ENCODE measurements at regions of chr6 and their contacts with region 1.

Region 1: DNA sequence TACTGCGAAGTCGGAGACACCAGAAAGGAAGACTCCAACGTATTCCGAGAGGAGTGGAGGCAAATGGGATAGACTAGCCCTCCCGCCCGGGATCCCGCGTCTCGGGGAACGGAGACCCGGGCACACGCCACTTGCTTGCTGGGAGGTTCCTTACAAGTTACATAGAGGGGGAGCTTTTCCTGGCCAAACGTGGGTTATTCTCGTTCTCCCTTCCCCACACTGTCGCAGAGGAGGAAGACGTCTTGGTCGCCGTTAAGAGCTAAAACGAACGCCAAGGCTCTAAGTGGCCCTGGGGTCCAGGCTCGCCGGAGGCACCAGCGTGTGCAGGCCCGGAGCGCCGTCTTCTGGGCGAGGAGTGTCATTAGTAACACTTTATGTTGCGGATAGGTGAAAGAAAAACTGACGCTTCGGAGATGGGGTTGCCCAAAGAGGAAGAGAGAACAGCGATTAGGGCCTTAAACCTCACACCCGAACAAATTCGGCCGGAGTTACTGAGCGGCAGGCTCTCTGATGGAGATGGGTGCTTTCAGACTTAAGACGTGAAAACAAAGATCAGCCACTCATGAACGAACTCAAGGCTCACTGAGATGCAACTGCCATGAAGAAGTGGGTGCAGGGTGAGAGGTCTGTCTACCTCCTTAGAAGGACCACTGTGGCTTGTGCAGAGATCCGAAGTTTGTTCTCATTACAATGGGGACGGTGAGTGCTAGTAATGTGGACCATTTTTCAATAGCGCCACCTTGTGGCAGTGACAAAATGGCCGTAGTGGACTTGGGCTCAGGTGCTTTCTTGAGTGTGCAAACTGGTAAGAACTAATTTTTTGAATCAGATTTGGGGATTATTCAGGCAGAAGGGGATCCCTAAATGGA is 11.7 kb upstream of the ZNF311 start:
- DNase-seq: peak; percentile 76
- ATAC-seq: peak; percentile 97
- H3K4me3 ChIP-seq: peak overlapping the region; percentile 64
- H3K27ac ChIP-seq: no peak overlapping the region; the same call in 1 of the 2 replicates
- H3K4me1 ChIP-seq: no peaks in the 10 kb centered on the region
- H3K27me3 ChIP-seq: peaks cover 10% of the 10 kb centered on the region
- CTCF ChIP-seq: peak; percentile 78
- POLR2A ChIP-seq: no peak
- RAD21 ChIP-seq: peak; percentile 73

Region 2: GRCh38 chr6:28863604-28864320 is 153.0 kb before region 1 on chr6:
- CTCF ChIA-PET with region 1: no interaction called
- POLR2A ChIA-PET with region 1: no interaction called
- dilution Hi-C with region 1: no loop called
- in situ Hi-C with region 1: no loop called
- intact Hi-C with region 1: loop called (anchors 10 kb)
- DNase-seq: peak; percentile 82
- ATAC-seq: peak; percentile 86
- H3K4me3 ChIP-seq: peak overlapping the region; percentile 87
- H3K27ac ChIP-seq: no peak overlapping the region
- H3K4me1 ChIP-seq: 0 out of 2 replicates have a peak, but pooled peaks cover 2% of the 10 kb centered on the region
- H3K27me3 ChIP-seq: no peaks in the 10 kb centered on the region
- CTCF ChIP-seq: no peak
- POLR2A ChIP-seq: no peak
- RAD21 ChIP-seq: no peak

Region 3: GRCh38 chr6:28953039-28953584 is 63.7 kb before region 1 on chr6:
- CTCF ChIA-PET with region 1: interaction called, 3 read pairs
- POLR2A ChIA-PET with region 1: no interaction called
- dilution Hi-C with region 1: no loop called
- in situ Hi-C with region 1: no loop called
- intact Hi-C with region 1: loop called (anchors 2 kb)
- DNase-seq: peak; percentile 72
- ATAC-seq: peak; percentile 90
- H3K4me3 ChIP-seq: peak overlapping the region; percentile 63
- H3K27ac ChIP-seq: no peak overlapping the region
- H3K4me1 ChIP-seq: no peaks in the 10 kb centered on the region; the same call in 1 of the 2 replicates
- H3K27me3 ChIP-seq: peaks cover 2% of the 10 kb centered on the region; the same call in 1 of the 2 replicates
- CTCF ChIP-seq: no peak
- POLR2A ChIP-seq: no peak
- RAD21 ChIP-seq: no peak

Region 4: DNA sequence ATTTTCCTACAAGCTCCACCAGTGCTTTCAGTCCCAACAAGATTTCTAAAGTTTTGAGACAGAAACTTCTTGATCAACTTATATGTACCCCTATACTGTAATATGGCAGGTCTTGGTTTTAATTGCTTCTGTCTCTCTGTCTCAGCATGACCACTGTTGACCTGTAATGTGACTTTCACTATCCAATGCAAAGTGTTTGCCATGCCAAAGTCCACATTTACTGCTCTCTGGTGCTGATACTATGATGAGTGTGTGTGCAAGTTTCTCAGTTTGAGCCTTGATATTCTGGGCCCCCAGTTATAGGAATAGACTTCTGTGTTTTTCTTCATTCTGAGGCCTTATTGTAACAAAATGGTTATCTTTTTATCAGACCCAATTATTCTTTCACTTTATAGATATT is 199.7 kb after region 1 on chr6:
- CTCF ChIA-PET with region 1: no interaction called
- POLR2A ChIA-PET with region 1: no interaction called
- dilution Hi-C with region 1: no loop called
- in situ Hi-C with region 1: no loop called
- intact Hi-C with region 1: no loop called
- DNase-seq: no peak
- ATAC-seq: no peak
- H3K4me3 ChIP-seq: no peak overlapping the region
- H3K27ac ChIP-seq: no peak overlapping the region
- H3K4me1 ChIP-seq: no peaks in the 10 kb centered on the region
- H3K27me3 ChIP-seq: no peaks in the 10 kb centered on the region
- CTCF ChIP-seq: no peak
- POLR2A ChIP-seq: no peak
- RAD21 ChIP-seq: no peak

Region 5: GRCh38 chr6:29589423-29590048 is 572.7 kb after region 1 on chr6:
- CTCF ChIA-PET with region 1: no interaction called
- POLR2A ChIA-PET with region 1: no interaction called
- dilution Hi-C with region 1: no loop called
- in situ Hi-C with region 1: no loop called
- intact Hi-C with region 1: loop called (anchors 1 kb)
- DNase-seq: peak; percentile 47
- ATAC-seq: peak; percentile 94
- H3K4me3 ChIP-seq: no peak overlapping the region
- H3K27ac ChIP-seq: no peak overlapping the region
- H3K4me1 ChIP-seq: no peaks in the 10 kb centered on the region
- H3K27me3 ChIP-seq: no peaks in the 10 kb centered on the region
- CTCF ChIP-seq: peak; percentile 78
- POLR2A ChIP-seq: no peak
- RAD21 ChIP-seq: peak; percentile 78

Region 6: GRCh38 chr6:29649701-29650673 is 633.2 kb after region 1 on chr6:
- CTCF ChIA-PET with region 1: no interaction called
- POLR2A ChIA-PET with region 1: no interaction called
- dilution Hi-C with region 1: no loop called
- in situ Hi-C with region 1: no loop called
- intact Hi-C with region 1: no loop called
- DNase-seq: peak; percentile 94
- ATAC-seq: peak; percentile 97
- H3K4me3 ChIP-seq: peak overlapping the region; percentile 50
- H3K27ac ChIP-seq: peak overlapping the region; percentile 19; the same call in 1 of the 2 replicates
- H3K4me1 ChIP-seq: no peaks in the 10 kb centered on the region
- H3K27me3 ChIP-seq: peaks cover 1% of the 10 kb centered on the region
- CTCF ChIP-seq: peak; percentile 98
- POLR2A ChIP-seq: 0 out of 2 replicates have a peak, but pooled peaks have one; percentile 29
- RAD21 ChIP-seq: peak; percentile 21; the same call in 1 of the 2 replicates